ENCODE measurements at regions of chr6 and their contacts with region 1.

Region 1: DNA sequence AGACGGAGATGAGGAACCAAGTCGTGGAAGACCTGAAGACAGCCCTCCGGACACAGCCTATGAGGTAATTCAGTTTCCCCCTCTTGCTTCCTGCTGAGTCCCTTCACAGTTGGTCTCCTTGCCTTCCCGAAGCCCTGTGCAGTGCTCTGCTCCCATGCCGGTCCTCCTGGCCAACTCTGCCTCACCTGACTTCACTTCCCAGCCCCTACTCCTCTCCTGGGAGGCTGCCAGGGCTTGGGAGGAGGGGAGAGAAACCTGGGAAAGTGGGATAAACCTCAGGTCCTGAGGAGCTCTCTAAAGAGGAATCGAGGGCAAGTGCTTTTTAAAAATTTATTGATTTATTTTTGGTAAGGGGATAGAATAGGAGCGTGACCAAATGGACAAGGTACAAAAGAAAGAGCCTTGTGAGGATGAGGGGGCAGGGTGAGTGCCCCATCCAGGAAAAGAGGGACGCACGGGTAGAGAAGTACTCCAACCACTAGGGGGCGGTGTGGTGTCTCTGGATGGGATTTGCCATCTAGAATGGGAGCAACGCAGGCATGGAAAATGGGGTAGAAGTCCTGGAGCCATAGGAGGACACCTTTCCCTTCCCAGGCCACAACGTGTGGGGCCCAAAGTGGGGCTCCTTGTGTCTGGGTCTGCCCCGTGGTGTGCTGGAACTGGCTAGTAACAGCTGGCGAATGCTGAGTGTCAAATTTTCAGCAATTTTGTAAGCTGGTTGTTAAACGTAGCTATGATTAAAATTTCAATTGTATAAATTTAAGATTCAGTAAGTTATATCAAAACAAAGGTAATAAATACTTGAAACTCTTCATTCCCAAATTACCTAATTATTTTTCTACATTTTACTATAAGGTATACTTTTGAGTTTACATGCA is 69.0 kb downstream of the MOCS1 start:
- DNase-seq: peak; percentile 71
- H3K4me3 ChIP-seq: no peak overlapping the region
- H3K27ac ChIP-seq: no peak overlapping the region
- H3K4me1 ChIP-seq: no peaks in the 10 kb centered on the region
- H3K27me3 ChIP-seq: peaks cover 0 to 2% of the 10 kb centered on the region in 2 experiments
- CTCF ChIP-seq: peak; percentile 80 to 81
- POLR2A ChIP-seq: no peak

Region 2: DNA sequence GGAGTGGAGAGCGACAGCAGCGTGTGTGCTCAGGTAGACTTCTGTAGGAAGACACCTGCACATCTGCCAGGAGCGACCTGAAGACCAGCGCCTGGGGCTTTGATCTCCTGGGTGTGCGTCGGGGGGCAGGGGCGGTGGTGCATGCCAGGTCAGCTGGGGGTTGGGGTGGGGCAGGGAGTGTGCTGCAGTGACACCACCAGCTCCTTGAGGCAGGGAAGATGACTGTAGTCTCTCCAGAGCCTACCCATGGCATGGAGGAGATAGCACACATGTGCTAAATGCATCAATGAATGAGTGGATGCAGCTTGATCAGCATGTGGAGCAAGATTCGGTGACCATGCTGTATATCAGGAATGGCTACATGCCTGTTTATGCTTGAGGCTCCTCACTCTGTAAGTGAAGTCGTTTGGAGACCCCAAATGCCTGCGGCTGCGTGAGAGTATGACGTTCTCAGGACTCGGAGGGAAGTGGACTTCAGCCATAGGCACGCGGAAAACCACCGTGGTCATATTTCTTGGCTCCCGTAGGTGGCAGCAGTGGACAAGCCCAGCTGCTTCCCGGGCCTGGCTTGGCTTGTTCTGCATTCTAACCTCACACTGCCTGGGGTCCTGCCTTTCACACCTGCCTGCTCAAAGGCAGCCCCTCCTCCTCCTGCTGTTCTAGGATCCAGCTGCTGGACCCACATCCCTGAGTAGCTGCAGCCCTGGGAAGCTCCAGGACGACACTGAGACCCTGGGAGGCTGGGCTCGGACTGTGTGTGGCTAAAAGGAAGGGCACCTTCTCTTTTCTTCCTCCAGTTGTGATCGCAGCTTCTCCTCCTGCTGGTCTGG is 503.4 kb before region 1 on chr6:
- CTCF ChIA-PET with region 1: interaction called, 12 read pairs
- POLR2A ChIA-PET with region 1: no interaction called
- dilution Hi-C with region 1: no loop called
- intact Hi-C with region 1: no loop called
- DNase-seq: peak; percentile 53
- H3K4me3 ChIP-seq: no peak overlapping the region
- H3K27ac ChIP-seq: no peak overlapping the region
- H3K4me1 ChIP-seq: no peaks in the 10 kb centered on the region
- H3K27me3 ChIP-seq: no peaks in the 10 kb centered on the region
- CTCF ChIP-seq: peak; percentile 65 to 85
- POLR2A ChIP-seq: no peak

Region 3: GRCh38 chr6:39850736-39851297 is 14.4 kb before region 1 on chr6:
- CTCF ChIA-PET with region 1: interaction called, 43 read pairs
- POLR2A ChIA-PET with region 1: interaction called, 4 read pairs
- dilution Hi-C with region 1: no loop called
- intact Hi-C with region 1: no loop called
- DNase-seq: no peak
- H3K4me3 ChIP-seq: no peak overlapping the region
- H3K27ac ChIP-seq: no peak overlapping the region
- H3K4me1 ChIP-seq: no peaks in the 10 kb centered on the region
- H3K27me3 ChIP-seq: no peaks in the 10 kb centered on the region
- CTCF ChIP-seq: no peak
- POLR2A ChIP-seq: no peak

Region 4: DNA sequence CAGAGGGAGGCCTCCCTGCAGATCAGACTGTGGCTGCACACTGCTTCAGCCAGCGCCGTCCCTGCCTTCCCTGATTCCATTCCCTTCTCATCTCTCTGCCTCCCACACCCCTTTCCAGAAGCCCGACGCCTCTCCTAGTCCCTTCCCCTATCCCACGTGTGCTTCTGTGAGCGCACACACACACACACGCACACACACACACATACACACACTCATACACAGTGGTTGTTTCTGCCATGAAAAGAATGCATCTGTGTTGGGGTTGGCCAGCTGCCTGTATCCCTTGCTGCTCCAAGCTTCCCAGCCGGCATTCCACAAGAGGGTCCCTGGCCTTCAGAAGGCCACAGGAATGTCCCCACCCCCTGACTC is 17.3 kb after region 1 on chr6:
- CTCF ChIA-PET with region 1: interaction called, 313 read pairs
- POLR2A ChIA-PET with region 1: no interaction called
- dilution Hi-C with region 1: no loop called
- intact Hi-C with region 1: loop called (anchors 1 kb)
- DNase-seq: peak; percentile 93
- H3K4me3 ChIP-seq: no peak overlapping the region
- H3K27ac ChIP-seq: peak overlapping the region; percentile 46
- H3K4me1 ChIP-seq: peaks cover 22% of the 10 kb centered on the region
- H3K27me3 ChIP-seq: no peaks in the 10 kb centered on the region
- CTCF ChIP-seq: no peak
- POLR2A ChIP-seq: no peak

Region 5: GRCh38 chr6:39892490-39893129 is 27.4 kb after region 1 on chr6:
- CTCF ChIA-PET with region 1: interaction called, 313 read pairs
- POLR2A ChIA-PET with region 1: no interaction called
- dilution Hi-C with region 1: no loop called
- intact Hi-C with region 1: loop called (anchors 1 kb)
- DNase-seq: peak; percentile 69
- H3K4me3 ChIP-seq: no peak overlapping the region
- H3K27ac ChIP-seq: no peak overlapping the region
- H3K4me1 ChIP-seq: peaks cover 10% of the 10 kb centered on the region
- H3K27me3 ChIP-seq: no peaks in the 10 kb centered on the region
- CTCF ChIP-seq: peak; percentile 79 to 94
- POLR2A ChIP-seq: no peak

Region 6: DNA sequence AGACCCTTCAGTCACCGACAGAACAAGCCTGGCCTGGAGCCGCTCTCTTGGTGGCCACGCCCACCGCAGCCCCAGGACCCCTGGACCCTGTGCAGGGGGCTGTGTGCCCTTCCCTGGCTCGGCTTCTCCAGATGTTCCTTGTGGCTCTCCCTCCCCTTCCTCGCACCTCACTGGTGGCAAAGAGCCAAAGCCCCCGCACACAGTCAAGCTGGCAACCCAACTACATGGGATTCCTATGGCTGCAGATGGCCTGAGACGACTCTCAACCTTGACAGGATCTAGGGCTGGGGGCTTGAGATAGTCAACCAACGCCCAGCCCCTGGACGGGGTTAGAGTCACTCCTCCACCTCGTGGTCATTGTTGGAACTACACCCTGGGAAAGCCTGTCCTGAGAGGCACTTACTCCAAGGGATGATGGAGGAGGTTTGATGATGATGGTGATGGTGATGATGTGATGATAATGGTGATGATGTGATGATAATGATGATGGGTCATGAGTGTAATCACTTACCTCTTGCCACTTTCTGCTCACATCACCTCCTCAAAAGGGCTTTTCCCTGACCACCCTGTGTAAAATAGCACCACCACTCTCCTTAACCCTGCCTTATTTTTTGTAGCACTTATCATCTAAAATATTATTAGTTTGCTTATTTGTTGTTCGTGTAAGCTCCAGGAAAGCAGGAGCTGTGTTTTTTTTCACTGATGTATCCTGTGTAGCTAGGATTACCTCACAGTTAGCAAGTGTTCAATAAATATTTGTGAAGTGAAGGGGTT is 443.5 kb after region 1 on chr6:
- CTCF ChIA-PET with region 1: interaction called, 9 read pairs
- POLR2A ChIA-PET with region 1: no interaction called
- dilution Hi-C with region 1: no loop called
- intact Hi-C with region 1: loop called (anchors 1 kb)
- DNase-seq: peak; percentile 43
- H3K4me3 ChIP-seq: no peak overlapping the region
- H3K27ac ChIP-seq: no peak overlapping the region
- H3K4me1 ChIP-seq: no peaks in the 10 kb centered on the region
- H3K27me3 ChIP-seq: no peaks in the 10 kb centered on the region
- CTCF ChIP-seq: peak; percentile 74 to 82
- POLR2A ChIP-seq: no peak